Testis (tissue), 5 donors: ENCODE measurements at regions of chr11 and their contacts with region 1.

Region 1: GRCh38 chr11:134033696-134034491 is 35.0 kb upstream of the JAM3 start:
- DNase-seq: peak; percentile 93
- H3K4me3 ChIP-seq: no peak overlapping the region
- H3K27ac ChIP-seq: peak overlapping the region; percentile 91 to 97
- H3K4me1 ChIP-seq: peaks cover 51% of the 10 kb centered on the region
- H3K27me3 ChIP-seq: no peaks in the 10 kb centered on the region
- CTCF ChIP-seq: no peak
- POLR2A ChIP-seq: peak; percentile 31

Region 2: GRCh38 chr11:133956650-133957633 is 77.0 kb before region 1 on chr11 and contains the start of gene IGSF9B:
- intact Hi-C with region 1: loop called (anchors 10 kb)
- DNase-seq: peak; percentile 94
- H3K4me3 ChIP-seq: peak within 1 kb of the TSS; percentile 60 to 70
- H3K27ac ChIP-seq: peak within 1 kb of the TSS; percentile 28 to 69
- H3K4me1 ChIP-seq: peaks cover 29% of the 10 kb centered on the region
- H3K27me3 ChIP-seq: no peaks in the 10 kb centered on the region
- CTCF ChIP-seq: no peak
- POLR2A ChIP-seq: no peak
- total RNA-seq, gene IGSF9B: 71.9 to 119 TPM

Region 3: GRCh38 chr11:134498326-134499139 is 464.6 kb after region 1 on chr11:
- intact Hi-C with region 1: no loop called
- DNase-seq: no peak
- H3K4me3 ChIP-seq: no peak overlapping the region
- H3K27ac ChIP-seq: no peak overlapping the region
- H3K4me1 ChIP-seq: no peaks in the 10 kb centered on the region
- H3K27me3 ChIP-seq: no peaks in the 10 kb centered on the region
- CTCF ChIP-seq: no peak
- POLR2A ChIP-seq: no peak